ENCODE measurements at regions of chr11 and their contacts with region 1.

Region 1: GRCh38 chr11:116641561-116642045 is 131.2 kb downstream of the BUD13 start:
- DNase-seq: peak; percentile 73
- H3K4me3 Mint-ChIP-seq: no peak overlapping the region
- H3K27ac Mint-ChIP-seq: no peak overlapping the region
- H3K4me1 Mint-ChIP-seq: no peaks in the 10 kb centered on the region
- H3K27me3 Mint-ChIP-seq: peaks cover 43% of the 10 kb centered on the region
- CTCF ChIP-seq: peak; percentile 67

Region 2: GRCh38 chr11:116170526-116171122 is 471.0 kb before region 1 on chr11:
- CTCF ChIA-PET with region 1: no interaction called
- intact Hi-C with region 1: loop called (anchors 5 kb)
- DNase-seq: peak; percentile 32
- H3K4me3 Mint-ChIP-seq: no peak overlapping the region
- H3K27ac Mint-ChIP-seq: no peak overlapping the region
- H3K4me1 Mint-ChIP-seq: no peaks in the 10 kb centered on the region
- H3K27me3 Mint-ChIP-seq: peaks cover 70% of the 10 kb centered on the region
- CTCF ChIP-seq: no peak

Region 3: DNA sequence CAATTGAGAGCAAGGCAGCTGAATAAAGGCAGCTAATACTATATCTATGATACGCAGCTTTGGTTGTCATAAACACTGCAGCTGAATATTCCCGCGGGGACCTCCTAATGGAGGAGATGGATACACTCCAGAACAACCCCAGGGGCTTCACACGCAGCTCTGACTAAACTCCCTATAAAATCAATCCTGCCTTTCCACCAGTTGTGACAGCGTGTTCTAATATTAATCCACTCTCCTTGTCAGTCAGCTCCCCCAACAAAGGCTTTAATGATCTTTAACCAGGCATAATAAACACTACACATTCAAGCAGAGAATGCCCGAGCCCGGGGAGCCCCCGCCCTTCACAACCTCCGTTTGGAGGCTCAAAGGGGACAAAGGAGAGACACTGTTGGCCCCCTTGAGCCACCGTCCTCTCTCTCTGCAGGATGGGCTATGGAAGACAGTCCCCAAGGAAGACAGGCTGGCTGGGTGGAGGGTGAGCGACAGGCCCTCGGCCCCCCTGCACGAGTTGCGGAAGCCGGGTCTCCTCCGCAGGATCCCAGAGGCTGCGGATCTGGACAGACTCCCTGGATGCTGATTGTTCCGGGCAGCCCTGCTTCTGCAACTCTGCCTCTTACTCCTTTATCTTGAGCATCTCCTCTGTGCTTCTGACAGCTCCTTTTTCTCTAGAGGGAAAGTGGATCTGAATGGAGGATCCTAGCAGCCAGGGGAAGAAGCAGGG is 434.0 kb before region 1 on chr11:
- CTCF ChIA-PET with region 1: no interaction called
- intact Hi-C with region 1: no loop called
- DNase-seq: no peak
- H3K4me3 Mint-ChIP-seq: no peak overlapping the region
- H3K27ac Mint-ChIP-seq: no peak overlapping the region
- H3K4me1 Mint-ChIP-seq: no peaks in the 10 kb centered on the region
- H3K27me3 Mint-ChIP-seq: peaks cover 70% of the 10 kb centered on the region
- CTCF ChIP-seq: no peak

Region 4: DNA sequence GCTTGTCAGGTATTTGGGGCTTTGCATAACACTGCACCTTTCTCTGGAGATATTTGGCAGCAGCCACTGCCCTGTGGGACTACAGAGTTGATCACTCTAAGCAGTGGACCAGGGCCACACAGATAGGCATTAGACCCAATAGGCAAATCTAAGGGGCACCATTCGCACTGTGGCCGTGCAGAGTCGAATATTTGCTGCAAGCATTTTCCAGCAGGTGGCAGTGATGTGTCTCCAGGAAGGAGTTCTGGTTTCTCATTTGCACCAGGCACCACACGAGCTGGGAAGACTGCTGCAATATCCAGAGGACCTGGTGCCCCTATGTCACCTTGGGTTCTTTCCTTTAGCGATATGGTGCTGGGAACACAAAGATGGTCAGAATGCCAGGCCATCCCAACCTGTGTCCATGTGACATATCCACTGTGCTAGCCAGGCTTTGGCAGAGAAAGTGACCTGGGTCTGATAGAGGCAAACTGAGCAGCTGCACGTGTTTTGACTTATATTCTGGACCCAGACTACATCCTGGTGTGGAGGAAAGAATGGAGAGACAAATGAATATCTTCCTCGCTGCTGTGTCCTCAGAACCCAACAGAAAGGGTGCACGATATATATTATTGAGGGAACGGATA is 187.5 kb before region 1 on chr11:
- CTCF ChIA-PET with region 1: interaction called, 5 read pairs
- intact Hi-C with region 1: loop called (anchors 5 kb)
- DNase-seq: peak; percentile 56
- H3K4me3 Mint-ChIP-seq: no peak overlapping the region
- H3K27ac Mint-ChIP-seq: no peak overlapping the region
- H3K4me1 Mint-ChIP-seq: no peaks in the 10 kb centered on the region
- H3K27me3 Mint-ChIP-seq: peaks cover 15% of the 10 kb centered on the region
- CTCF ChIP-seq: peak; percentile 30

Region 5: DNA sequence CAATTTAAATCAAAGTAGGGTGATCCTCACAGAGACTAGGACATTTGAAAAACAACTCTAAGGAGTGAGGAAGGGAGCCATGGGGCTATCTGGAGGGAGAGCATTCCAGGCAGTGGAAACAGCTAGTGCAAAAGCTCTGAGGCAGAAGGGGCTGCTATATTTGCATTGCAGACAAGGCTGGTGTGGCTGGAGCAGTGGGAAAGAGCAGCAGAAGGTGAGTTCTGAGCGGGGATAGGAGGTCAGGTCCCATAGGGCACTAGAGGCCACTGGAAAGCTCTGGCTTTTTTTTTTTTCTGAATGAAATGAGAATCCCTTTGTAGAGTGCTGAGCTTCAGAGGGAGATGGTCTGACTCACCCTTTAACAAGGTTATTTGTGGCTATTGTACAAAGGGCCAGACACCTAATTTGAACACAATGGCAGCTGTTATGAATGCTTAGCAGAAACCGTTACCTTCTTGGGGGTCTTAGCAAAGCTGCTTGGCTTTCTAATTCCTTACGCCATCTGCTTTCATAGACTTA is 160.4 kb before region 1 on chr11:
- CTCF ChIA-PET with region 1: no interaction called
- intact Hi-C with region 1: no loop called
- DNase-seq: no peak
- H3K4me3 Mint-ChIP-seq: no peak overlapping the region
- H3K27ac Mint-ChIP-seq: no peak overlapping the region
- H3K4me1 Mint-ChIP-seq: no peaks in the 10 kb centered on the region
- H3K27me3 Mint-ChIP-seq: peaks cover 55% of the 10 kb centered on the region
- CTCF ChIP-seq: no peak

Region 6: DNA sequence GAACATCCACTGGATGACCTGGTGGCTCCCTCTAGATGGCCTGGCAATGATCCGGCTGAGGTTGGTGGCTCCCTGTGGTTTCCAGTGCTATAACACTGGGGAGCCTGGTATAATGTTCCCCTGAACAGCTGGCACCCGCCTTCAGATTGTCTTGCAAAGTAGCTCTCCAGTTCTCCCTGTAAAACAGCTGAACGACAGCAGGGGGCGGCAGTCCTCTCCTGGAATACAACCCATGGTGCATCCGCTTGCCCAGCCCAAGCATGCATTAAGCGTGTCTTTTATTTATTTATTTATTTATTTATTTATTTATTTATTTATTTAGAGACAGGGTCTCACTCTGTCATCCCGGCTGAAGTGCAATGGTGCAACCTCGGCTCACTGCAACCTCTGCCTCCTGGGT is 127.7 kb before region 1 on chr11:
- CTCF ChIA-PET with region 1: interaction called, 7 read pairs
- intact Hi-C with region 1: loop called (anchors 2 kb)
- DNase-seq: peak; percentile 36
- H3K4me3 Mint-ChIP-seq: no peak overlapping the region
- H3K27ac Mint-ChIP-seq: no peak overlapping the region
- H3K4me1 Mint-ChIP-seq: no peaks in the 10 kb centered on the region
- H3K27me3 Mint-ChIP-seq: peaks cover 78% of the 10 kb centered on the region
- CTCF ChIP-seq: no peak

Region 7: DNA sequence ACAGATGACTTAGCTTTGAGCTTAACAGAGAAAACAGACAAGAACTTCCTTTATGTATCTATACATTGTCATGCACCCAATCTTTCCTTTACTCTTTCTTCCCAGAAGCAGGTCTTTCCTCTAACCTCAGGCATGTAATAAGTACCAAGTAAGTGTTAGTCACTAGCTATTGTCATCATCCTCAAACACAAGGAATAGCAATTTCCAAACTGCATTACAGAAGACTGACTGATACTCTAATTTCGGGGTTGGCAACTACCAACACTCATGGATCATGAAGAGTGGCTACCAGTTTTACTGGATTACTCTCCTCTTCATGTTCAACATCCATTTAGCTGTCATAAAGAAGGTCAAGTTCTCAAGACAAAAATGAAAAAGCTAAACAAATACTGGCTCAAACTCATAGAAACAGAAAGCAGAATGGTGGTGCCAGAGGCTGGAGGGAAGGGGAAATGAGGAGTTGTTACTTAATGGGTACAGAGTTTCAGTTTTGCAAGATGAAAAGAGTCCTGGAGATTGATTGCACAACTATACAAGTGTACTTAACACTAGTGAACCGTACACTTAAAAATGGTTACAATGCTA is 345.0 kb after region 1 on chr11:
- CTCF ChIA-PET with region 1: no interaction called
- intact Hi-C with region 1: no loop called
- DNase-seq: no peak
- H3K4me3 Mint-ChIP-seq: no peak overlapping the region
- H3K27ac Mint-ChIP-seq: peak overlapping the region; percentile 24
- H3K4me1 Mint-ChIP-seq: peaks cover 31% of the 10 kb centered on the region
- H3K27me3 Mint-ChIP-seq: no peaks in the 10 kb centered on the region
- CTCF ChIP-seq: no peak

Measured in Calu3 (cell line).